CD4-positive, alpha-beta T cell (primary cell): ENCODE measurements at regions of chr19 and their contacts with region 1.

Region 1: GRCh38 chr19:19956434-19957075 is 55.8 kb downstream of the ZNF93 start:
- DNase-seq: no peak
- ATAC-seq: no peak
- H3K4me3 ChIP-seq: no peak overlapping the region
- H3K4me3 Mint-ChIP-seq: no peak overlapping the region
- H3K27ac ChIP-seq: no peak overlapping the region
- H3K27ac Mint-ChIP-seq: no peak overlapping the region
- H3K4me1 ChIP-seq: peaks cover 6% of the 10 kb centered on the region
- H3K4me1 Mint-ChIP-seq: no peaks in the 10 kb centered on the region
- H3K27me3 ChIP-seq: no peaks in the 10 kb centered on the region
- H3K27me3 Mint-ChIP-seq: no peaks in the 10 kb centered on the region
- CTCF ChIP-seq: no peak

Region 2: GRCh38 chr19:19627621-19628500 is 328.7 kb before region 1 on chr19 and contains the start of gene LPAR2:
- CTCF ChIA-PET with region 1: no interaction called
- POLR2A ChIA-PET with region 1: no interaction called
- intact Hi-C with region 1: loop called in 1 of 2 experiments (anchors 5 kb)
- DNase-seq: peak; percentile 65 to 91 (median 80)
- ATAC-seq: peak; percentile 83
- H3K4me3 ChIP-seq: peak within 1 kb of the TSS; percentile 84
- H3K4me3 Mint-ChIP-seq: peak within 1 kb of the TSS; percentile 99
- H3K27ac ChIP-seq: peak within 1 kb of the TSS; percentile 52 to 84
- H3K27ac Mint-ChIP-seq: peak within 1 kb of the TSS; percentile 91
- H3K4me1 ChIP-seq: peaks cover 37% of the 10 kb centered on the region
- H3K4me1 Mint-ChIP-seq: peaks cover 28% of the 10 kb centered on the region
- H3K27me3 ChIP-seq: no peaks in the 10 kb centered on the region
- H3K27me3 Mint-ChIP-seq: no peaks in the 10 kb centered on the region
- CTCF ChIP-seq: no peak
- total RNA-seq, gene LPAR2: 85.9 to 93.7 TPM

Region 3: DNA sequence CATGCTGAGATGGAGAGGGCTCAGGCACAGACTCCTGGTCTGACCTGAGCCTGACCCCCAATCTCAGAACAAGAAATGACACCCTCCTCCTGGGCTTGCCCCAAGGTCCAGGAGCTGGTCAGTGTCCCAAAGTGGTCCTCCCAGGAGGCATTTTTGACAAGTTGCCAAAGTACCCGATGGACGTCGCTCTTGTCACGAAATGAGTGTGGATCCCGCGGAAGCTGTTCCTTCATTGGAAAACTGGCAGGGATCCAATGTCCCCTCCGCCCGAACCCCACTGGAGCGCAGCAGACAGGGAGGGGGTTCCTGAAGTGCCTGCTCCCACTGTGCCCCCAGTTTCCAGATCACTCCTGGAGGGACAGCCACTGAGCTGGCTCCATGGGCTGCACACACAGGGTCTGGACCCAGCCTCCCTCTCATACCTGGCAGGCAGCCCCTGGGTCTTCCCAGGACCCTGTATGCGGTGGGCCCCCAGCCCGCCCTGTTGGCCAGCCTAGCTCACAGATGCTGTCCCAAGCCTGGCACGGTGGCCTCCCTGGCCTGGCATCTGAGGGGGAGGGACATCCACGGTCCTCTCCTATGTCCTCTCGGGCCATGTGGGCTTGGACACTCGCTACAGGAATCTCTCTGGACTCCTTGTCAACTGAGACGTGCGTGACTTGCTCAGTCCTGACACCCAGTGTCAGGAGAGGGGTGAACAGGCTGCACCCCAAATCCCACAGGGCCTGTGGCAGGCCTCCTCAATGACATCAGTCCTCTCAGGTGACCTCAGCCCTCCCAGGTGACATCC is 210.9 kb before region 1 on chr19:
- CTCF ChIA-PET with region 1: no interaction called
- POLR2A ChIA-PET with region 1: no interaction called
- intact Hi-C with region 1: loop called in 1 of 2 experiments (anchors 5 kb)
- DNase-seq: peak in 2 of 14 experiments; percentile 20 to 32
- ATAC-seq: peak; percentile 65
- H3K4me3 ChIP-seq: no peak overlapping the region
- H3K4me3 Mint-ChIP-seq: no peak overlapping the region
- H3K27ac ChIP-seq: no peak overlapping the region
- H3K27ac Mint-ChIP-seq: no peak overlapping the region
- H3K4me1 ChIP-seq: no peaks in the 10 kb centered on the region
- H3K4me1 Mint-ChIP-seq: no peaks in the 10 kb centered on the region
- H3K27me3 ChIP-seq: no peaks in the 10 kb centered on the region
- H3K27me3 Mint-ChIP-seq: no peaks in the 10 kb centered on the region
- CTCF ChIP-seq: no peak

Region 4: DNA sequence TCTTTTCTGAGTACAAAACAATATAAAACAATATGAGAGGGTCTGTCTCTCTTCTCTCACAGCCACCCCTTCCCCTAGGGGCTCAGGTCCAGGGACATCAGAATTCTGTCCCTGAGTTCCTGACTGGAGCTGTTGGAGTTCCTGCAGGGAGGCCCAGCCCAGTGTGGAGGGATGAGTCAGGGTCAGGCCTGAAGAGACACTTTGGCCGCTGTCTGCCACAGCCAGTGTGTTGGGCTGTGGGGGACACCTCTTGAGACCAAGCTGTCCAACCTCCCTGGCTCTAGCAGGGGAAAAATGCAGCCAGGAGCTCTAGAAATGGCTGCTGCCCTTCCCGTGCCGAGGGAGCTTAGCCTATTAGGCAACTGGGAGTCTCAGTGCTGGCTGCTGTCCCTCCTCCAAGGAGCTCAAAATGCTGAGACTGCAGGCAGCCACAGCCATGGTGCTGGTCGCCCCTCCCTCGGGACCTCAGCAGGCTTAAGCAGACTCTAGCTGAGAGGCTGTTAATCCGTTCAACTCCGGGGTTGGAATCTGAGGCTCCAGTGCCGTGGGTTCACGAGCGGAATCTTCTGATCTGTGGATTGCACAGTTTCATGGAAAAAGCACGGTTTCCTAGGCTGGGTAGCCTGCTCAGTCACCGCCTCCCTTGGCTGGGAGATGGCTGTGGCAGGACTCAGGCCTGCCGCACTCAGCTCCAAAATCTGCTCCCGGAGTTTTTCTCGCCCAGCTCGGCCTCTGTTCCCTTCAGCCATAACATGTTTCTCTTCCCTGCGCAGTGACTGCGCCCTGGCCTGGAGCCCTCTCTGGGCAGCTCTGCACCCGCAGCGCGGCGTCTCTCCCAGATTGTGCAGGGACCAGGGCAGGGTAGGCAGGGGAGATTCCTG is 708.6 kb after region 1 on chr19:
- CTCF ChIA-PET with region 1: no interaction called
- POLR2A ChIA-PET with region 1: no interaction called
- intact Hi-C with region 1: no loop called
- DNase-seq: no peak
- ATAC-seq: no peak
- H3K4me3 ChIP-seq: no peak overlapping the region
- H3K4me3 Mint-ChIP-seq: peak overlapping the region; percentile 57
- H3K27ac ChIP-seq: no peak overlapping the region
- H3K27ac Mint-ChIP-seq: no peak overlapping the region
- H3K4me1 ChIP-seq: peaks cover 14% of the 10 kb centered on the region
- H3K4me1 Mint-ChIP-seq: peaks cover 39% of the 10 kb centered on the region
- H3K27me3 ChIP-seq: no peaks in the 10 kb centered on the region
- H3K27me3 Mint-ChIP-seq: no peaks in the 10 kb centered on the region
- CTCF ChIP-seq: no peak